Activated B cell treated with CpG ODN at 0.5 μM for 24 hours (primary cell): ENCODE measurements at regions of chr11 and their contacts with region 1.

Region 1: GRCh38 chr11:111422494-111423249 is 43.6 kb upstream of the POU2AF1 start:
- DNase-seq: peak; percentile 69
- ATAC-seq: peak; percentile 76
- H3K4me3 Mint-ChIP-seq: peak overlapping the region; percentile 42
- H3K27ac Mint-ChIP-seq: peak overlapping the region; percentile 82
- H3K4me1 Mint-ChIP-seq: peaks cover 59% of the 10 kb centered on the region
- H3K27me3 Mint-ChIP-seq: no peaks in the 10 kb centered on the region
- CTCF ChIP-seq: no peak

Region 2: DNA sequence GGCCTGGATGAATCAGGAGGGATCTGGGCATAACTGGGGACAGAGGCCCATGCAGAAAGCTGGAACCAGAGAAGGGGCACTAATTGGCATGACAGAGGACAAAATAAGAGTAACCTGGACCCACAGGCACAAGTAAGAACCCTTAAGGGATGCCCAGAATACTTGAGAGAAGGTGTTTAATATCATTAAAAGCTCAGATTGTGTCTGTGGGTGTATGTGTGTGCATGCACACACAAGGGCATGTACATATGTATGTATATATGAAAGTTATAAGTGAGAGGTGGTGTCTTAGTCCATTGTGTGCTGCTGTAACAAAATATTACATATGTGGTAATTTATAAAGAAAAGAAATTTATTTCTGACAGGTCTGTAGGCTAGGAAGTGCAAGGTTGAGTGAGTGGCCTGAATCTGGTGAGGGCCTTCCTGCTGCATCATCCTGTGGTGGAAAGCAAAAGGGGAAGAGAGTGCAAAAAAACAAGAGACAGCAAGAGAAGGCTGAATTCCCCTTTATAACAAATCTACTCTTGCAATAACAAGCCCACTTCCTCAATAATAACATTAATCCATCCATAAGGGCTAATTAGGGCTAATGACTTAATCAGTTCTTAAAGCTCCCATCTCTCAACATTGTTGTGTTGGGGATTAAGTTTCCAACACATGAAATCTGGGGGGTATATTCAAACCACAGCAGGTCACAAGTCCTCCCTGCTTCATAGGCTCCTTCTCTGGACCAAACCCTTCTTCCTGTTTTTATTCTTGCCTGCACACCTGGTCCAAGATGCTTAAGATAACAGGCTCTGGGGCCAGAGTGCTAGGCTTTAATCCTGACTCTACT is 245.4 kb before region 1 on chr11:
- CTCF ChIA-PET with region 1: no interaction called
- POLR2A ChIA-PET with region 1: no interaction called
- intact Hi-C with region 1: loop called (anchors 1 kb)
- DNase-seq: peak; percentile 25
- ATAC-seq: peak; percentile 85
- H3K4me3 Mint-ChIP-seq: peak overlapping the region; percentile 62
- H3K27ac Mint-ChIP-seq: peak overlapping the region; percentile 93
- H3K4me1 Mint-ChIP-seq: peaks cover 77% of the 10 kb centered on the region
- H3K27me3 Mint-ChIP-seq: no peaks in the 10 kb centered on the region
- CTCF ChIP-seq: no peak

Region 3: GRCh38 chr11:111299101-111300026 is 123.3 kb before region 1 on chr11:
- CTCF ChIA-PET with region 1: interaction called, 35 read pairs
- POLR2A ChIA-PET with region 1: interaction called, 17 read pairs
- intact Hi-C with region 1: loop called (anchors 1 kb)
- DNase-seq: peak; percentile 47
- ATAC-seq: peak; percentile 70
- H3K4me3 Mint-ChIP-seq: peak overlapping the region; percentile 81
- H3K27ac Mint-ChIP-seq: no peak overlapping the region
- H3K4me1 Mint-ChIP-seq: peaks cover 41% of the 10 kb centered on the region
- H3K27me3 Mint-ChIP-seq: peaks cover 11% of the 10 kb centered on the region
- CTCF ChIP-seq: no peak

Region 4: DNA sequence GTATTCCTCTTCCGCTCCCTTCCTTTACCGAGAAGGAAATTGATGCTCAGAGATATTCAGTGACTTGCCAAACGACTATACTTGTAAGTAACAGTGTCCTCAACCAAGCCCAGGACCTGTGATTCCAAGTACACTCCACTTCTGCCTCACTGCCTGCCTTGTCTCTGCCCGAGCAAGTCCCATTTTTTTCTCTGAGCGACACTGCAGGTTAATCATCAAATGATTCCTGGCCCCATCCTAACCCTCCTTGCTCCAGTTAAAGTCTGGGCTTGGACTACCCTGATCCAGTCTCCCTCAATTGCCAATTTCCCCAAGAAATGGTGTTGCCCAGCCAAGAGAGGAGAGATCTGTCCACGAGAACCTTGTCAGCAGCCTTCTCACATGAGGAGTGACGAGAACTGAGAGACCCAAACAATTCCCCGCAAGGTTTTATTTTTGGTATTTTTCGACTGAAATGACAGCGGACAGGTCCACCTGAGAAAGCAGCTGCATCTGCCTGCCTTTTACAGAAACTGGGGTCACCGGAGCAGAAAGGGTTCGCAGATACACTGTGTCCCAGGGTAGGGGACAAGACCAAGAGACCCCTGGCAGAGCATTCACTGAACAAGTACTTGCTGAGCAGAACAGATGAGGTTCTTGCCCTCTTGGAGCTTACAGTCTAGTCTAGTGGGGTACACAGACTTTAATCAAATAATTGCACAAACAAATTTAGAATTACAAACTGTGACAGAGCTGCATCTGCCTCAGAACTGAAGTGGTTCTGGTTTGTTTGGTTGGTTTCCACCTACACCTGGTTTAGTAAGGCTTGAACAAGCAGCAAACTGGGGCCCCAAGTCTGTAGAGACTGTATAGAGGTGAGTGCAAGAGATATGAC is 55.0 kb before region 1 on chr11:
- CTCF ChIA-PET with region 1: interaction called, 144 read pairs
- POLR2A ChIA-PET with region 1: interaction called, 581 read pairs
- intact Hi-C with region 1: loop called (anchors 1 kb)
- DNase-seq: no peak
- ATAC-seq: peak; percentile 51
- H3K4me3 Mint-ChIP-seq: peak overlapping the region; percentile 67
- H3K27ac Mint-ChIP-seq: peak overlapping the region; percentile 98
- H3K4me1 Mint-ChIP-seq: no peaks in the 10 kb centered on the region
- H3K27me3 Mint-ChIP-seq: no peaks in the 10 kb centered on the region
- CTCF ChIP-seq: no peak

Region 5: DNA sequence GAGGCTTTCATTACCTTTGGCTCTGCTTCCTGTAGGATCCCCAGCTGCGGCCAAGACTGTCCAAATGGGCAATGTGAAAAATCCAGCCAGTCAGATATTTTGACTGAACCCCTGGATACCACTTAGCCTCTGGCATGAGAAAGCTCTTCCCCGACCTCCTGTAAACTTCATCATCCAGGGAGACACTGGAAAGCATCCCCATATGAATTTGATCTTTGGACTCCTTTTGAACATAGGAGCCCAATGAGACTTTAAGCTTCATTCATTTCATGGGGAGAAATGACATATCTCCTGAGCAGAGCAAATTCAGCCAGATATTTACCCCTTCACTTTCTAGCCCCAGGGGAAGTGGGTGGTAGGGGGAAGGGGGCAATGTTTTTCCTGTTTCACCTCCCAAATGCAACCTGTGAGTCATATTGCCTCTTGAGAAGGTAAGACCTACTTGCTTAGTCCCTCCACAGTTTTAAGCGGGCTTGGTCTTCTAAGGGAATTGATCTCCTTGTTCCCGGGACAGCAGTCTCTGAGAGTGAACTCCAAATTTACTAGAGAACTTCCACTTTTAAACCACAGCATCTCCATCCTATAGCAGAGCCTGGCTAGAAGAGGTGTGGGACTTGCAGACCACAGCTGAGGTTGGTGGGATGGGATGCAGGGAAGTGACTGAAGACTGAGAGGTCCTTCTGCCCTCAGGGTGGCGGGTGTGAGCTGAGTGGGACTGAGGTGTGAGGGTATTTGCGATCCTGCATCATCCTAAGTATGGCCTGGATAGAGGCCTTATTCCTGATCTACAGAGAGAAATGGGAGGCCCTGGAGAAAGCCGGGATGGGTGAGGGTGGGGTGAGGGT is 23.3 kb before region 1 on chr11:
- CTCF ChIA-PET with region 1: interaction called, 25 read pairs
- POLR2A ChIA-PET with region 1: interaction called, 250 read pairs
- intact Hi-C with region 1: loop called (anchors 1 kb)
- DNase-seq: no peak
- ATAC-seq: peak; percentile 54
- H3K4me3 Mint-ChIP-seq: peak overlapping the region; percentile 82
- H3K27ac Mint-ChIP-seq: peak overlapping the region; percentile 88
- H3K4me1 Mint-ChIP-seq: peaks cover 88% of the 10 kb centered on the region
- H3K27me3 Mint-ChIP-seq: no peaks in the 10 kb centered on the region
- CTCF ChIP-seq: no peak

Region 6: DNA sequence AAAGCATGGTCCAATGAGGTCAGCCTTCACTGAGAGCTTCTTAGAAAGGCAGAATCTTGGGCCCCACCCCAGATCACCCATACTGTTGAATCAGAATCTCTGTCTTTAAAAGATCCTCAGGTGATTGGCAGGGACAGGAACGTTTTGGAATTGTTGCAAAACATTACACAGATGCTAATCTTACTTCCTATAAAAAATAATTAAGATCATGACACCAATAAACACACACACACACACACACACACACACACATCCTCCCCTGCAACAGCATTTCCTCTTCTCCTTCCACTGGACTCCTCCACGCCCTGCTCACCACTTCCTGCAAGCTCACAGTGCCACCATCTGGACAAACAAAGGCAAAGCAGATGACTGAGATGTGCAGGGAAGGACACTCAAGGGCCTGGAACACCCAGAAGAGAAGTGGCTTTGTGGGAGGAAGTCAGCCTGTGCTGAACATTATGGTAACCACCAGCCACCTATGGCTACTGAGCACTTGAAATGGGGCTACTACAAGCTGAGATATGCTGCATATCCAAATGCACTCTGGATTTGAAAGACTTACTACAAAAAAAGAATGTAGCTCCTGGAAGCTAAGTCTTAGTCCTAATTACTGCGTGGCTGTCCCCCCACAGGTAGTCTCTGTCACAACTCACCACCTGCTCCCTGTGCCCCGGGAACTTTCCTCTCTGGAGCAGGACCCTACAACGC is 23.9 kb after region 1 on chr11:
- CTCF ChIA-PET with region 1: interaction called, 42 read pairs
- POLR2A ChIA-PET with region 1: interaction called, 4 read pairs
- intact Hi-C with region 1: loop called (anchors 1 kb)
- DNase-seq: peak; percentile 55
- ATAC-seq: peak; percentile 95
- H3K4me3 Mint-ChIP-seq: no peak overlapping the region
- H3K27ac Mint-ChIP-seq: peak overlapping the region; percentile 43
- H3K4me1 Mint-ChIP-seq: peaks cover 36% of the 10 kb centered on the region
- H3K27me3 Mint-ChIP-seq: peaks cover 2% of the 10 kb centered on the region
- CTCF ChIP-seq: no peak